ENCODE measurements at regions of chr20 and their contacts with region 1.

Region 1: DNA sequence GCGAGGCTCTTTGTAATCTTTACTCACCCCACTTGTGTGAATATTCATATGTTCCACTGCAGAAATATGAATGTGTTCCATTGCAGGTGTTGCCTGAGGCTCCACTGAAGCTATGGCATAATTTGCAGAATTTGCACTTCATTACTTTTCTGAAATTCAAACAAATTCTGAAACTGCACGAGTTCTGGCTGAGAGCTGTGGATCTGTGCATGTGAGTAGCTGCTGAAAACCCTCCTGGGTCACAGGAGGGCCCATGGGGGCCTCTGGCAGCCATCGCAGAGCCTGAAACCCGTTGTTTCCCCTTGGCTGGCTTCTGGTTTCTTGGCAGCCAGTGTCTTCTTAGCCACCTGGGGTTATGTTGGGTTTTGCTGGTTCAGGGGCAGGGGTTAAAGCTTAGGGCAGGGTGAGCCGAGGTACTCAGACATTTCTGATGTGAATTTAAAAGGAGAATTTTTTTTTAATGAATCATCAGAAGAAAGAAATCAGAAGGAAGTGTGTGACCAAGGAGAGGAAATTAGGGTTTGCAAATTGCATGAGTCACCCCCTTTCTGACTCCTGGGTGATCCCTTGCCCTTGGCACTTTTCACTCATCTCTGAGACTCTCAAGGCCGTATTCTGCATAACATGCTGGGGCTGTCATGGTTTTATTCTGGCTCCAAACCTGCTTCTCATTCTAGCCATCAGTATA is 40.6 kb downstream of the TOX2 start:
- DNase-seq: peak in 3 of 9 donors; percentile 13 to 49 (median 13)
- ATAC-seq: peak; percentile 72
- H3K4me3 ChIP-seq: no peak overlapping the region
- H3K4me3 Mint-ChIP-seq: peak overlapping the region in 7 of 10 donors; percentile 8 to 65 (median 22)
- H3K27ac ChIP-seq: no peak overlapping the region
- H3K27ac Mint-ChIP-seq: peak overlapping the region in 2 of 9 donors; percentile 28 to 58
- H3K4me1 ChIP-seq: peaks cover 72 to 76% of the 10 kb centered on the region in 2 donors
- H3K4me1 Mint-ChIP-seq: peaks cover 72 to 96% (median 85%) of the 10 kb centered on the region in 7 donors
- H3K27me3 ChIP-seq: peaks cover 0 to 5% of the 10 kb centered on the region in 2 donors
- H3K27me3 Mint-ChIP-seq: peaks cover 0 to 45% (median 0%) of the 10 kb centered on the region in 5 donors

Region 2: DNA sequence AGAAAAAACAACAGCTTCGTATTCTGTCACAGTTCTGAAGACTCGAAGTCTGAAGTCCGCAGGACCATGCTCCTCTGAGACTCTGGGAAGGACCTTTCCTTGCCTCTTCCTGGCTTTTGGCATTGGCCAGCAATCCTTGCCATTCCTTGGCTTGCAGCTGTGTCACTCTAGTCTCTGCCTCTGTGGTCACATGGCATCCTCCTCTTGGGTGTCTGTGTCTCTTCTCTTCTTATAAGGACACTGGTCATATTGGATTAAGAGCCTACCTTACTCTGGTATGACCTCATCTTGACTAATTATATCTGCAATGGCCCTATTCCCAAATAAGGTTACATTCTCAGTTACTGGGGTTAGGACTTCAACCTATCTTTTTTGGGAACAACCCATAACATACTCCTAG is 178.6 kb before region 1 on chr20:
- CTCF ChIA-PET with region 1: no interaction called
- POLR2A ChIA-PET with region 1: no interaction called
- intact Hi-C with region 1: no loop called
- DNase-seq: no peak
- ATAC-seq: no peak
- H3K4me3 ChIP-seq: no peak overlapping the region
- H3K4me3 Mint-ChIP-seq: no peak overlapping the region
- H3K27ac ChIP-seq: no peak overlapping the region
- H3K27ac Mint-ChIP-seq: no peak overlapping the region
- H3K4me1 ChIP-seq: no peaks in the 10 kb centered on the region
- H3K4me1 Mint-ChIP-seq: peaks cover 0 to 2% (median 0%) of the 10 kb centered on the region in 7 donors
- H3K27me3 ChIP-seq: no peaks in the 10 kb centered on the region
- H3K27me3 Mint-ChIP-seq: peaks cover 5 to 17% (median 15%) of the 10 kb centered on the region in 5 donors

Region 3: GRCh38 chr20:43914311-43915210 is 40.6 kb before region 1 on chr20 and contains the start of gene TOX2:
- CTCF ChIA-PET with region 1: no interaction called
- POLR2A ChIA-PET with region 1: no interaction called
- intact Hi-C with region 1: loop called in 1 of 2 experiments (anchors 2 kb)
- DNase-seq: peak; percentile 12 to 59 (median 42)
- ATAC-seq: peak; percentile 86
- H3K4me3 ChIP-seq: peak within 1 kb of the TSS; percentile 57
- H3K4me3 Mint-ChIP-seq: peak within 1 kb of the TSS; percentile 78 to 97 (median 88)
- H3K27ac ChIP-seq: no peak within 1 kb of the TSS
- H3K27ac Mint-ChIP-seq: peak within 1 kb of the TSS in 8 of 9 donors; percentile 70 to 94 (median 78)
- H3K4me1 ChIP-seq: peaks cover 14 to 16% of the 10 kb centered on the region in 2 donors
- H3K4me1 Mint-ChIP-seq: peaks cover 12 to 28% (median 21%) of the 10 kb centered on the region in 7 donors
- H3K27me3 ChIP-seq: peaks cover 0 to 6% of the 10 kb centered on the region in 2 donors
- H3K27me3 Mint-ChIP-seq: peaks cover 26 to 62% (median 34%) of the 10 kb centered on the region in 5 donors
- total RNA-seq, gene TOX2: 0.22 to 7.1 (median 0.96) TPM

Region 4: GRCh38 chr20:44033344-44033743 is 78.1 kb after region 1 on chr20:
- CTCF ChIA-PET with region 1: no interaction called
- POLR2A ChIA-PET with region 1: interaction called, 4 read pairs
- intact Hi-C with region 1: loop called in 1 of 2 experiments (anchors 5 kb)
- DNase-seq: no peak
- ATAC-seq: no peak
- H3K4me3 ChIP-seq: no peak overlapping the region
- H3K4me3 Mint-ChIP-seq: no peak overlapping the region
- H3K27ac ChIP-seq: no peak overlapping the region
- H3K27ac Mint-ChIP-seq: peak overlapping the region in 2 of 9 donors; percentile 2 to 32
- H3K4me1 ChIP-seq: peaks cover 11 to 13% of the 10 kb centered on the region in 2 donors
- H3K4me1 Mint-ChIP-seq: peaks cover 25 to 60% (median 45%) of the 10 kb centered on the region in 7 donors
- H3K27me3 ChIP-seq: no peaks in the 10 kb centered on the region
- H3K27me3 Mint-ChIP-seq: peaks cover 0 to 55% (median 13%) of the 10 kb centered on the region in 5 donors

Measured in naive thymus-derived CD4-positive, alpha-beta T cell (primary cell).